IMR-90 (cell line): ENCODE measurements at regions of chr3 and their contacts with region 1.

Region 1: GRCh38 chr3:130250982-130251381 is 94.5 kb upstream of the COL6A5 start:
- DNase-seq: no peak
- ATAC-seq: no peak
- H3K4me3 ChIP-seq: no peak overlapping the region
- H3K27ac ChIP-seq: no peak overlapping the region
- H3K4me1 ChIP-seq: no peaks in the 10 kb centered on the region
- H3K27me3 ChIP-seq: no peaks in the 10 kb centered on the region
- CTCF ChIP-seq: no peak
- POLR2A ChIP-seq: no peak
- RAD21 ChIP-seq: no peak

Region 2: GRCh38 chr3:129723558-129724324 is 527.2 kb before region 1 on chr3:
- CTCF ChIA-PET with region 1: no interaction called
- POLR2A ChIA-PET with region 1: no interaction called
- dilution Hi-C with region 1: no loop called
- in situ Hi-C with region 1: no loop called
- intact Hi-C with region 1: no loop called
- DNase-seq: peak; percentile 89
- ATAC-seq: peak; percentile 89
- H3K4me3 ChIP-seq: no peak overlapping the region
- H3K27ac ChIP-seq: peak overlapping the region; percentile 70; the same call in 1 of the 2 replicates
- H3K4me1 ChIP-seq: peaks cover 5% of the 10 kb centered on the region
- H3K27me3 ChIP-seq: no peaks in the 10 kb centered on the region
- CTCF ChIP-seq: no peak
- POLR2A ChIP-seq: no peak
- RAD21 ChIP-seq: no peak

Region 3: GRCh38 chr3:129911261-129911861 is 339.6 kb before region 1 on chr3:
- CTCF ChIA-PET with region 1: no interaction called
- POLR2A ChIA-PET with region 1: no interaction called
- dilution Hi-C with region 1: no loop called
- in situ Hi-C with region 1: no loop called
- intact Hi-C with region 1: no loop called
- DNase-seq: no peak
- ATAC-seq: no peak
- H3K4me3 ChIP-seq: no peak overlapping the region
- H3K27ac ChIP-seq: no peak overlapping the region
- H3K4me1 ChIP-seq: no peaks in the 10 kb centered on the region
- H3K27me3 ChIP-seq: no peaks in the 10 kb centered on the region
- CTCF ChIP-seq: no peak
- POLR2A ChIP-seq: no peak
- RAD21 ChIP-seq: no peak

Region 4: DNA sequence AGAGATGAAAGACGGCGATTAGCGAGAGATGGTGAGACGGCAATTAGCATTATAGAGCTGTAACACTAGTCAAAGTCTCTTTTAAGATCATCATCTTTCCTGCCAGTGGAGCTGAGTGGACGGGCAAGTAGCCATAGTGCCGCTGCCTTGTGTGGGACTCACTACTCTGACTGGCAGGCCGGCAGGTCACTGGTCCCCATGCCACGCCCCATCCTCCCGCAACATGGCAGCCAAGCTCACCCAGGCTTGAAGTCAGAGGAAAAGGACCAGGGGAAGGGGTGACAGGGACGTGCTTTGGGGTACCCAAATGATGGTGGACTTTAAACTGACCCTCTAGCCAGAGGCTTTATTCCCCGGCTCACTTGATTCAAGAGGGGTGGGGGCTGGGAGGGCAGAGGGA is 49.9 kb after region 1 on chr3:
- CTCF ChIA-PET with region 1: no interaction called
- POLR2A ChIA-PET with region 1: no interaction called
- dilution Hi-C with region 1: no loop called
- in situ Hi-C with region 1: no loop called
- intact Hi-C with region 1: loop called (anchors 2 kb)
- DNase-seq: no peak
- ATAC-seq: no peak
- H3K4me3 ChIP-seq: no peak overlapping the region
- H3K27ac ChIP-seq: no peak overlapping the region
- H3K4me1 ChIP-seq: no peaks in the 10 kb centered on the region
- H3K27me3 ChIP-seq: no peaks in the 10 kb centered on the region
- CTCF ChIP-seq: no peak
- POLR2A ChIP-seq: no peak
- RAD21 ChIP-seq: no peak

Region 5: DNA sequence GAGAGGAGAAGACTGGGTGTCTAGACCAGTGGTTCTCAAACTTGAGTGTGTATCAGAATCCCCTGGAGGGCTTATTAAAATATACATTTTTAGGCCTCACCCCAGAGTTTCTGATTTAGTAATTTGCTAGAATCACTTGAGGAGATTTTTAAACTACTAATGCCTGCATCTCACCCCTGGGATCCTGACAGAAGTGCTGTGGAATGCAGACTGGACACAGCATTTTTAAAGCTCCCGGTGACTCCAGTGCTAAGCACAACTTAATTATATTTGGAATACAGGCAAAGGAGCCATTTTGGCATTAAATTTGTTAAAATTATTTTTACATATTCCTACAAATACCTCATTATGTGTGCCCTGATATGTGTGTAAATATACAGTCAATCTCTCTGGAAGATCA is 239.3 kb after region 1 on chr3:
- CTCF ChIA-PET with region 1: no interaction called
- POLR2A ChIA-PET with region 1: no interaction called
- dilution Hi-C with region 1: no loop called
- in situ Hi-C with region 1: no loop called
- intact Hi-C with region 1: no loop called
- DNase-seq: no peak
- ATAC-seq: 0 out of 2 replicates have a peak, but pooled peaks have one; percentile 32
- H3K4me3 ChIP-seq: no peak overlapping the region
- H3K27ac ChIP-seq: no peak overlapping the region
- H3K4me1 ChIP-seq: no peaks in the 10 kb centered on the region
- H3K27me3 ChIP-seq: no peaks in the 10 kb centered on the region
- CTCF ChIP-seq: no peak
- POLR2A ChIP-seq: no peak
- RAD21 ChIP-seq: no peak